Mammary epithelial cell (primary cell): ENCODE measurements at regions of chr11 and their contacts with region 1.

Region 1: DNA sequence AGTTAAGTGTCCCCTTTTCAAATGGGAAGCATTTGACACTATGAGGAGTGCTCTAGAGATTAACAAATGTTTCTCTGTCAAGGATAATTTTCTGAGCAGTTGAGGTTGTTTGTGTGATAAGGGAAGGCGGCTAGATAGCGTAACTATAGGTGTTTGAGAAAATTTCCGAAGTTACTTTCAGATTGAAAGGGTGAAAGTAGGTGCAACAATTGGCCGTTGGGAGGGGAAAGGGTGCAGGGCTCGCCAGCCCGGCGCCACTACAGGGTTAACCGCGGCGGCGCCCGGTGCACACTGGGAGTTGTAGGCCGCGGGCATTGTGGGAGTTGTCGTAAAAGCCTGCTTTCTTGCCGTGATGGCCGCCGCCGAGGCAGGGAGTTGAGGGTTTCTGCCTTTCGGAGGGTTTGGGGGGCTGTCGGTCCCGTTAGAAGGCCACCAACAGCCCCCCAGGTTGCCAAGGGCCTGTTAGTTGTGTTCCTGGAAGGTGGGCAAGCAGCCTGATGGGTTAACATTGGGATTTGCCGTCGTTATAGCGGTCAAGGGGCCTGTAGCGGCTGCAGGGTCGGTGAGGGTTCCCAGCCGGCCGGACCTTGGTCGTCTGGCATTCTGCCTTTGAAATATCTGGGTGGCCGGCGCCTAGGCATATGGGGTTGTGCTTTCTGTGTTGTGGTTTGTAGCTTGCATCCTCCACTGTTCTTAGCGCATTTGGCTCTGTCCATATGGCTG is 36.5 kb upstream of the HSD17B12 start:
- DNase-seq: peak; percentile 76
- H3K4me3 ChIP-seq: peak overlapping the region; percentile 79 to 80 (median 80)
- H3K27ac ChIP-seq: peak overlapping the region; percentile 45
- H3K4me1 ChIP-seq: peaks cover 6% of the 10 kb centered on the region
- H3K27me3 ChIP-seq: peaks cover 2% of the 10 kb centered on the region
- CTCF ChIP-seq: no peak

Region 2: GRCh38 chr11:43802509-43802908 is 158.4 kb after region 1 on chr11:
- CTCF ChIA-PET with region 1: no interaction called
- dilution Hi-C with region 1: no loop called
- in situ Hi-C with region 1: no loop called
- intact Hi-C with region 1: loop called (anchors 10 kb)
- DNase-seq: no peak
- H3K4me3 ChIP-seq: no peak overlapping the region
- H3K27ac ChIP-seq: no peak overlapping the region
- H3K4me1 ChIP-seq: peaks cover 3% of the 10 kb centered on the region
- H3K27me3 ChIP-seq: no peaks in the 10 kb centered on the region
- CTCF ChIP-seq: peak; percentile 27 to 47